ENCODE measurements at regions of chr12 and their contacts with region 1.

Region 1: GRCh38 chr12:8860165-8860961 is 37.9 kb downstream of the A2ML1 start:
- DNase-seq: peak; percentile 50
- ATAC-seq: peak; percentile 58
- H3K4me3 Mint-ChIP-seq: no peak overlapping the region
- H3K27ac Mint-ChIP-seq: no peak overlapping the region
- H3K4me1 Mint-ChIP-seq: no peaks in the 10 kb centered on the region
- H3K27me3 Mint-ChIP-seq: no peaks in the 10 kb centered on the region
- CTCF ChIP-seq: peak; percentile 69

Region 2: GRCh38 chr12:8662593-8662992 is 197.8 kb before region 1 on chr12 and contains the start of gene MFAP5:
- CTCF ChIA-PET with region 1: interaction called, 22 read pairs
- POLR2A ChIA-PET with region 1: no interaction called
- intact Hi-C with region 1: no loop called
- DNase-seq: no peak
- ATAC-seq: no peak
- H3K4me3 Mint-ChIP-seq: no peak within 1 kb of the TSS
- H3K27ac Mint-ChIP-seq: no peak within 1 kb of the TSS
- H3K4me1 Mint-ChIP-seq: no peaks in the 10 kb centered on the region
- H3K27me3 Mint-ChIP-seq: peaks cover 4% of the 10 kb centered on the region
- CTCF ChIP-seq: no peak
- total RNA-seq, gene MFAP5: not detected

Region 3: DNA sequence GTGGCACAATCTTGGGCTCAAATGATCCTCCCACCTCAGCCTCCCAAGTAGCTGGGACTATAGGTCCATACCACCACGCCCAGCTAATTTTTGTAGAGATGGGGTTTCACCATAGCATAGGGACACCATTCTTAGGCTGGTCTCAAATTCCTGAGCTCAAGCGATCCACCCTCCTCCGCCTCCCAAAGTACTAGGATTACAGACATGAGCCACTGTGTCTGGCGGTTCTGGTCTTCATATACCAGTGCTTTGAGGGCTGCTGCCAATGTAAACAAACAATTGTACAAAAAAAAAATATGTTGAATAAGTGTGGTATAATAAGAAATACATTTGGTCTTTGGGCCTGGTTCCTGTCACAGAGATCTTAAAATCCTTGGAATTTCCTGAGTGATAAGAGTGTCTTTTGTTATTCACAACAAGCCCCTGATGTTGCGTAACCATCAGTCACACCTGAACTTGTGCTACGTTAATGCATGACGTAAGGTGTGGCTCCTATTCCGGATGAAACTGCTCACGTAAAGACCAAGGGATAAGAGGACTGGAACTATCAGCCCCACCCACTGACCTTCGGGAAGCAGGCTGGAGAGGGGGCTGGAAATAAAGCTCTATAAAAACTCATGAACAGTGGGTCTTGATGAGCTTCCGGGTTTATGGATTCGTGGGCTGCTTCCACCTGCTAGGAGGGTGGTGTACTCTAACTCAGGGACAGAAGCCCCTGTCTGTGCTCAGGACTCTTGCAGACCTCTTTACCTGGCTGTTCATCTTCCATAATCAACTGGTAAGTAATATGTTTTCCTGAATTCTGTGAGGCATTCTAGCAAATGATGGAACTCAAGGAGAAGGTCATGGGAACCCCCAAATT is 179.1 kb before region 1 on chr12:
- CTCF ChIA-PET with region 1: interaction called, 31 read pairs
- POLR2A ChIA-PET with region 1: no interaction called
- intact Hi-C with region 1: no loop called
- DNase-seq: no peak
- ATAC-seq: no peak
- H3K4me3 Mint-ChIP-seq: no peak overlapping the region
- H3K27ac Mint-ChIP-seq: no peak overlapping the region
- H3K4me1 Mint-ChIP-seq: no peaks in the 10 kb centered on the region
- H3K27me3 Mint-ChIP-seq: no peaks in the 10 kb centered on the region
- CTCF ChIP-seq: no peak

Region 4: DNA sequence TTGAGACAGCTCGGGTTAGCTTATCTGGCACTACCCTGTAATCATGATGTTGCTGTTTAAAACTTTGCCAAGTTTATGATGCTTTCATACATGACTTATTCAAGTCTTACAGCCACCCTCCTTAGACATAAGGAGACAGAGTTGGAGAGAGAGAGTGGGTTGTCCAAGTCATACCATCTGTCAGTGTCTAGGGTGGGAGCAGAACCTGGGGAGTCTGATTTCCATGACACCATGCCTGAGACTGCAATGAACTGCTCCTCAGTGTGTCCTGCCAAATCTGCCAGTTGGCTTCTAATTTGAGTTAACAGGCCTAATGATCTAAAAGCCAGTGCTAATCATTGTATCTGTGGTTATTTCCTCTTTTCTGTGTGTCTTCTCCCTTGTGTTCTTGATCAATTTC is 10.2 kb after region 1 on chr12:
- CTCF ChIA-PET with region 1: interaction called, 18 read pairs
- POLR2A ChIA-PET with region 1: no interaction called
- intact Hi-C with region 1: no loop called
- DNase-seq: no peak
- ATAC-seq: no peak
- H3K4me3 Mint-ChIP-seq: no peak overlapping the region
- H3K27ac Mint-ChIP-seq: no peak overlapping the region
- H3K4me1 Mint-ChIP-seq: no peaks in the 10 kb centered on the region
- H3K27me3 Mint-ChIP-seq: no peaks in the 10 kb centered on the region
- CTCF ChIP-seq: no peak

Region 5: GRCh38 chr12:9079883-9080675 is 219.7 kb after region 1 on chr12:
- CTCF ChIA-PET with region 1: no interaction called
- POLR2A ChIA-PET with region 1: no interaction called
- intact Hi-C with region 1: no loop called
- DNase-seq: no peak
- ATAC-seq: no peak
- H3K4me3 Mint-ChIP-seq: no peak overlapping the region
- H3K27ac Mint-ChIP-seq: no peak overlapping the region
- H3K4me1 Mint-ChIP-seq: no peaks in the 10 kb centered on the region
- H3K27me3 Mint-ChIP-seq: no peaks in the 10 kb centered on the region
- CTCF ChIP-seq: no peak

Region 6: GRCh38 chr12:9273276-9273675 is 412.9 kb after region 1 on chr12:
- CTCF ChIA-PET with region 1: no interaction called
- POLR2A ChIA-PET with region 1: no interaction called
- intact Hi-C with region 1: no loop called
- DNase-seq: no peak
- ATAC-seq: no peak
- H3K4me3 Mint-ChIP-seq: no peak overlapping the region
- H3K27ac Mint-ChIP-seq: no peak overlapping the region
- H3K4me1 Mint-ChIP-seq: no peaks in the 10 kb centered on the region
- H3K27me3 Mint-ChIP-seq: peaks cover 2% of the 10 kb centered on the region
- CTCF ChIP-seq: no peak